Common myeloid progenitor, CD34-positive (primary cell): ENCODE measurements at regions of chr4 and their contacts with region 1.

Region 1: GRCh38 chr4:1693129-1693896 is 9.2 kb upstream of the FAM53A start:
- DNase-seq: peak; percentile 80 to 91 (median 91)
- H3K4me3 ChIP-seq: no peak overlapping the region
- H3K27ac ChIP-seq: no peak overlapping the region
- H3K4me1 ChIP-seq: no peaks in the 10 kb centered on the region
- H3K27me3 ChIP-seq: no peaks in the 10 kb centered on the region

Region 2: GRCh38 chr4:1410491-1411325 is 282.6 kb before region 1 on chr4:
- CTCF ChIA-PET with region 1: no interaction called
- POLR2A ChIA-PET with region 1: no interaction called
- DNase-seq: peak; percentile 66 to 83 (median 82)
- H3K4me3 ChIP-seq: no peak overlapping the region
- H3K27ac ChIP-seq: no peak overlapping the region
- H3K4me1 ChIP-seq: peaks cover 0 to 11% (median 1%) of the 10 kb centered on the region in 4 experiments
- H3K27me3 ChIP-seq: peaks cover 0 to 92% (median 37%) of the 10 kb centered on the region in 5 experiments

Region 3: DNA sequence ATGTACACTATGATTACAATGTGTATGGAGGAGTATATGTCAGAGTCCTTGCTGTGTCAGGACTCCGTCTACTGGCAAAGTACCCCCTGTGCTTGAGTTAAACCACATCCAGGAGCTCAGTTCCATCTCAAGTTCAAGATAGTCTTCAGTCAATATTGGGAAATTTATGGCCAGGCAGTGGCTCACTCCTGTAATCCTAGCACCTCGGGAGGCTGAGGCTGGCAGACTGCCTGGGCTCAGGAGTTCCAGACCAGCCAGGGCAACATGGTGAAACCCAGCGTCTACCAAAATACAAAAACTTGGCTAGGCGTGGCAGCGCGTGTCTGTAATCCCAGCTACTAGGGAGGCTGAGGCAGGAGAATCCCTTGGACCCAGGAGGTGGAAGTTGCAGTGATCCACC is 13.0 kb after region 1 on chr4:
- CTCF ChIA-PET with region 1: interaction called, 88 read pairs
- POLR2A ChIA-PET with region 1: interaction called, 7 read pairs
- DNase-seq: no peak
- H3K4me3 ChIP-seq: no peak overlapping the region
- H3K27ac ChIP-seq: no peak overlapping the region
- H3K4me1 ChIP-seq: peaks cover 0 to 17% (median 11%) of the 10 kb centered on the region in 4 experiments
- H3K27me3 ChIP-seq: no peaks in the 10 kb centered on the region

Region 4: DNA sequence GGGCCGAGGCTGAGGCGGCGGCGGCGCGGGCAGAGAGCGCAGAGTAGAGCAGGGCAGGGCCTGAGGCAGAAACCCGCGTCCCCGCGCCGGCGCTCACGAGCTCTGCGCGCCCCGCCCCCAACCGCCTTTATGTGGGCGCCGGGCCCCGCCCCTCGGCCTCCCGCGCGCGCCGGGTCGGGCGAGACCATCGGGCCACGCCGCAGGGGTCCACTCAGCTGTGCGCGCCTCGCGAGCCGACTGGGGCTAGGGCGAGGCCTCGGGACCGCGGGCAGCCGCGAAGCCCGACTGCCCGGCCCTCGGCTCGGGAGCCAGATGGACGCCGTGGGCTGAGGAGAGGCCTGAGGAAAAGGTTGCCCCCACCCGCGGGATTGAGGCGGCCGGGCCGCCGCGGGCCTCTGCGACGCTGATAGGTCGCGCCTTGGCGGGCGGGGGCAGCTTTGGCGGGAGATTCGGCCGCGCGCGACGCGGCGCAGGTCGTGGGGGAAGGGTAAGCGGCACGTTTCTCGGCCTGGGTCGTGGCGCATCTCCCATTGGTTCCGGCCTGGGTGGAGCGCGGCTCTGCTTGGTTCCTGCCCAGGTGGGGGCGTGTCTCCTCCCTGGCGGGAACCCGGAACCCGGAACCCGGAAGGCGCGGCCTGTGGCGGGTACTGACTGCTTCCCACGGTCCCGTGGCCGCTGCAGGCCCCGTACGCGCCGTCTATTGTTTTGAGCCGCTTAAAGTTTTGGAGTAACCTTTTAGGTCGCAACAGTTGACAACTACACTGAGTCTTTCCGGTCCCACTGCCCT is 19.1 kb after region 1 on chr4 and contains the start of gene SLBP:
- CTCF ChIA-PET with region 1: interaction called, 705 read pairs
- POLR2A ChIA-PET with region 1: interaction called, 7 read pairs
- DNase-seq: peak; percentile 97 to 98 (median 98)
- H3K4me3 ChIP-seq: peak within 1 kb of the TSS; percentile 79 to 98 (median 91)
- H3K27ac ChIP-seq: peak within 1 kb of the TSS; percentile 94 to 97
- H3K4me1 ChIP-seq: peaks cover 10 to 60% (median 56%) of the 10 kb centered on the region in 4 experiments
- H3K27me3 ChIP-seq: no peaks in the 10 kb centered on the region

Region 5: GRCh38 chr4:1726146-1726934 is 33.0 kb after region 1 on chr4:
- CTCF ChIA-PET with region 1: interaction called, 705 read pairs
- POLR2A ChIA-PET with region 1: interaction called, 19 read pairs
- DNase-seq: peak; percentile 87 to 93 (median 90)
- H3K4me3 ChIP-seq: peak overlapping the region in 4 of 7 experiments; percentile 20 to 70 (median 40)
- H3K27ac ChIP-seq: peak overlapping the region; percentile 59 to 68
- H3K4me1 ChIP-seq: peaks cover 12 to 83% (median 75%) of the 10 kb centered on the region in 4 experiments
- H3K27me3 ChIP-seq: no peaks in the 10 kb centered on the region

Region 6: GRCh38 chr4:1740021-1740545 is 46.8 kb after region 1 on chr4:
- CTCF ChIA-PET with region 1: interaction called, 13 read pairs
- POLR2A ChIA-PET with region 1: no interaction called
- DNase-seq: no peak
- H3K4me3 ChIP-seq: no peak overlapping the region
- H3K27ac ChIP-seq: no peak overlapping the region
- H3K4me1 ChIP-seq: no peaks in the 10 kb centered on the region
- H3K27me3 ChIP-seq: no peaks in the 10 kb centered on the region

Region 7: DNA sequence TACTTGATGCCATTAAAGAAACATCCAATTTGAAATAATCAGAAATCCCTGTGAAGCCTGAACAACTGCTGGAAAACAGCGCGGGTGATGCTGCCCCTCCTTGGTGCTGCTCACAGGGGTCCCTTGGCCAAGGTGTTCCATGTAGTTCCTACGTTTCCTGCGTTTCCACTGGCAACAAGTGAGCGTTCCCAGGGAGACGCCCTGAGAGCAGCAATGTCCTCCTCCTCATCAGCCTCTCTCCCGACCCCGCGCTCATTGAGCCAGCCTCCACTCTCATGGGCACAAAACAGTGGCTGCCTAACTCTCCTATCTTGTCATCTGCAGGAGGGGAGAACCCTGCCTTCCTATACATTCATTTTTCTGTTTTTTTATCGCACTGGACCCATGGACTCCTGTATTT is 143.8 kb after region 1 on chr4:
- CTCF ChIA-PET with region 1: no interaction called
- POLR2A ChIA-PET with region 1: no interaction called
- DNase-seq: no peak
- H3K4me3 ChIP-seq: no peak overlapping the region
- H3K27ac ChIP-seq: no peak overlapping the region
- H3K4me1 ChIP-seq: peaks cover 0 to 5% (median 0%) of the 10 kb centered on the region in 4 experiments
- H3K27me3 ChIP-seq: no peaks in the 10 kb centered on the region